SK-N-SH (cell line): ENCODE measurements at regions of chr6 and their contacts with region 1.

Region 1: DNA sequence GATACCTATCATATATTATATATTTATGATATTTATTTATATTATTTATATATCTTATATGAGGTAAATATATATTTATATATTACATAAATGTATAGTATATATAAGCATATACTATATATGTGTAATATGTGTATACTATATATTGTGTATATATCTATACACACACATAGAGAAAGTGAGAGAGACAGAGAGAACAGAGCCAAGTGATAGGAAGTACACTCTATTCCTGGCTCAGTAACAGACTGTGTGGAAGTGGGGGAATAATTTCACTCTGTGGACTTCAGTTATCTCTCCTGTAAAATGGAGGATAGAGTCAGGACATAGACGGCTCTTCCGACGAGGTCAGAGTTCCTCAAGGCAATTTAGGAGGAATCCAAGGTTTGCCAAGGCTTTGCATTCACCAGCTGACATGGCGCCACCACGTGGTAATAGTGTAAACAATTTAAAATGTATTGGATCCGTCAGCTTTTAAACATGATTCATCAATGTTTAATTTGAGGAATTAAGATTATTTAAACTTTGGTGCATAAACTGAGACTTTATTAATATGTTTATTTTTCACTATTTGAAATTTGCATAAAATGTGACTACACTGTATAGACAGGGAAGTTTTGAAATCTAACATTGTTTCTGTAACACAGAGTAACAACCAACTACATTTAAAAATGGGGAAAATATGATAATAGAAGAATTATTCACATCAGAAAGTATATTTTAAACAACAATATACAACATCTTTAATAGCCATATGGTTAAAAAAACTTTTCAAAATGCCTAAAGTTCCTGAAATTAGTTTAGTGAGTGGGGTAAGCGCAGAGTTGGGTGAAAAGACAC is 75.4 kb upstream of the TMEM244 start:
- DNase-seq: no peak
- H3K4me3 ChIP-seq: peak overlapping the region in 1 of 2 experiments; percentile 27; a peak in 1 of 4 replicates
- H3K27ac ChIP-seq: no peak overlapping the region
- H3K4me1 ChIP-seq: no peaks in the 10 kb centered on the region
- H3K27me3 ChIP-seq: no peaks in the 10 kb centered on the region
- CTCF ChIP-seq: peak; percentile 79
- EP300 ChIP-seq: no peak
- RAD21 ChIP-seq: peak; percentile 59

Region 2: GRCh38 chr6:129947797-129948196 is 11.2 kb after region 1 on chr6:
- CTCF ChIA-PET with region 1: interaction called, 10 read pairs
- POLR2A ChIA-PET with region 1: no interaction called
- DNase-seq: no peak
- H3K4me3 ChIP-seq: no peak overlapping the region
- H3K27ac ChIP-seq: no peak overlapping the region
- H3K4me1 ChIP-seq: no peaks in the 10 kb centered on the region
- H3K27me3 ChIP-seq: no peaks in the 10 kb centered on the region
- CTCF ChIP-seq: no peak
- EP300 ChIP-seq: no peak
- RAD21 ChIP-seq: no peak